ENCODE measurements at regions of chr17 and their contacts with region 1.

Region 1: GRCh38 chr17:43719578-43719977 is 39.0 kb downstream of the SOST start:
- DNase-seq: no peak
- H3K4me3 Mint-ChIP-seq: peak overlapping the region; percentile 84
- H3K27ac Mint-ChIP-seq: peak overlapping the region; percentile 90
- H3K4me1 Mint-ChIP-seq: peaks cover 17% of the 10 kb centered on the region
- H3K27me3 Mint-ChIP-seq: peaks cover 22% of the 10 kb centered on the region

Region 2: GRCh38 chr17:43760254-43760852 is 40.8 kb after region 1 on chr17:
- intact Hi-C with region 1: loop called (anchors 2 kb)
- DNase-seq: peak; percentile 79
- H3K4me3 Mint-ChIP-seq: no peak overlapping the region
- H3K27ac Mint-ChIP-seq: no peak overlapping the region
- H3K4me1 Mint-ChIP-seq: no peaks in the 10 kb centered on the region
- H3K27me3 Mint-ChIP-seq: peaks cover 19% of the 10 kb centered on the region